Astrocyte of the cerebellum (primary cell): ENCODE measurements at regions of chr11 and their contacts with region 1.

Region 1: DNA sequence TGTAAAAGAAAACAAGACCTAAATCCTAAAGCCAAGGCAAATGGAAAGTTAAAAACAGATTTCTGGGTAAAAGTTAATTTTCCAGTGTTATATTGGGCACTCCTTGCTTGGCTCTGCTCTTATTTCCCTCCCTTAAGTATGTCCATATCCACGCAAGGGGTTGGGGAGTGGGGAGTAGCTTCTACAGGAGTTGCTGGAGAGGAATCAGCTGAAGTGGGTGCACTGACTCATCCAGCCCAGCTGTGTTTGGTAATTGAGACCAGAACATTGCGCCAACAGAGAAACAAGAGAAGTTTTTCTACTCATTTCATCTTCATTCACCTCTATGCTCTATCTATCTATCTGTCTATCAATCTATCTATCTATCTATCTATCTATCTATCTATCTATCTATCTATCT is 298.4 kb upstream of the PDGFD start:
- DNase-seq: peak; percentile 4
- H3K4me3 ChIP-seq: no peak overlapping the region
- CTCF ChIP-seq: no peak

Region 2: GRCh38 chr11:104402812-104403521 is 59.4 kb before region 1 on chr11:
- in situ Hi-C with region 1: loop called (anchors 10 kb)
- DNase-seq: no peak
- H3K4me3 ChIP-seq: no peak overlapping the region
- CTCF ChIP-seq: no peak